T-cell (primary cell): ENCODE measurements at regions of chr1 and their contacts with region 1.

Region 1: DNA sequence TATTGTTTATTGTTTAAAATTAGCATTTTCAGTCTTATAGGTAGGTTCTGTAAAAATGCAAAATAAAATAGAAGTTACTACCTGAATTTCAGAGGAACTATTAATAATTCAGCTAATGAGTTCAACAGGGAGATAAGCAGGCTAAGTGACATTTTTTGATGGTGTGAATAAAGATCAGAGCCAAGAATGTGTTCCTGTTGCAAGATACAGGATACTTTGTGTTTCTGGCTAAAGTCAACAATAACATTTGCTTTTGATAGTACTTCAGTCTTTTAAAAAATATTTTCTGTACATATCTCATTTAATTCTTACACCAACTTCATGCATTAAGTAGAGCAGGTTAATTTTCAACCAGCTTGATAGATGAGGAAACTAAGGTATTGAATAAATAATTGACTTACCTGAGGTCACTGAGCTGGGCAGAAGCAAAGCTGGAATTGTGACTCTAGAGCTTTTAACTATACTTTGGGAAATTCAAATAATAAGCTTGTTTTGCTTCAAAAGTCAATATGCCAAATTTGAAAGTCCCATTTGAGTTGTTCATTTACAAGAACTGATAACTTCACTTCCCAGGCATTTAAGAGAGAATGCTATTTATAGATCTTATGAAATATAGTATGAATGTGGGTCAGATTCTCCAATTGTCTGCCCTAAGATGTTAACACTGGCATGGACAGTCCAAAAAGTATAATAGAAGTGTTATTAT is 6.0 kb downstream of the GORAB start:
- DNase-seq: no peak
- ATAC-seq: no peak
- H3K4me3 ChIP-seq: no peak overlapping the region
- H3K4me3 Mint-ChIP-seq: no peak overlapping the region
- H3K27ac ChIP-seq: no peak overlapping the region
- H3K27ac Mint-ChIP-seq: no peak overlapping the region
- H3K4me1 ChIP-seq: peaks cover 3 to 4% of the 10 kb centered on the region in 2 experiments
- H3K4me1 Mint-ChIP-seq: peaks cover 25 to 31% (median 28%) of the 10 kb centered on the region in 3 donors
- H3K27me3 ChIP-seq: no peaks in the 10 kb centered on the region
- H3K27me3 Mint-ChIP-seq: no peaks in the 10 kb centered on the region

Region 2: DNA sequence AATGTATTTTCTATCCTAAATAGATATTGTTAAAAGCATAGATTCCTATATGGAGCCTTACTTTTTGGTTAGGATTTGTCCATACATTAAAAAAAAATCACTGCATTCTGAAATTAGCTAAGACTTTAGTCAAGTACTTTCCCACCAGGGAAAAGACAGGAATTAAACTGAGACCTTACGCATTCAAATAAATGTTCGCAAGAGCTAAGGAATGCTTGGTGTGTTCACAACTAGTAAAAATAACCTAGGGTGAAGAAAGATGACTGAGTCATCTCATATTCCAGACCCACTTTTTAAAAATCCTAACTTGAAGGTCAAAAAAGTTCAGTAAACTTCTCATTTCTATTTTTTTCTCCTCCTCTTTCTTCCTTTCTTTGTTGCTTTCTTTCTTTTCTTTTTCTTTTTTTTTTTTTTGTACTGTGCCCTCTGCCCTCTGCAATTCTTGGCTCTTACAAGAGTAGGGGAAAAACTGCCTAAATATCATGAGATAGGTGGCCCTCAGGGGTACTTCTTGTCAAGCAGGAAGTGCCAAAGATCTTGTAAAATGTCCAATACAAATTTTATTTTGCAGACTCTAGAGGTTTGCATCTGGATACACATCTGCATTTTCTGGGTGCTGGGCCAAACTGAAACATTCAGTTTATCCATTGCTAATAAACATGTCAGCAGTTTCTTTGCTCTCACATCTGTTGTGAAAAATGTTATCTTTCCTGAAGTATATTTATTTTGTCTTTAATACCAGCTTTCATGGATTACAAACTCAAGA is 127.4 kb before region 1 on chr1:
- CTCF ChIA-PET with region 1: no interaction called
- POLR2A ChIA-PET with region 1: no interaction called
- DNase-seq: no peak
- ATAC-seq: no peak
- H3K4me3 ChIP-seq: no peak overlapping the region
- H3K4me3 Mint-ChIP-seq: no peak overlapping the region
- H3K27ac ChIP-seq: no peak overlapping the region
- H3K27ac Mint-ChIP-seq: no peak overlapping the region
- H3K4me1 ChIP-seq: no peaks in the 10 kb centered on the region
- H3K4me1 Mint-ChIP-seq: no peaks in the 10 kb centered on the region
- H3K27me3 ChIP-seq: no peaks in the 10 kb centered on the region
- H3K27me3 Mint-ChIP-seq: peaks cover 9 to 16% of the 10 kb centered on the region in 2 donors

Region 3: DNA sequence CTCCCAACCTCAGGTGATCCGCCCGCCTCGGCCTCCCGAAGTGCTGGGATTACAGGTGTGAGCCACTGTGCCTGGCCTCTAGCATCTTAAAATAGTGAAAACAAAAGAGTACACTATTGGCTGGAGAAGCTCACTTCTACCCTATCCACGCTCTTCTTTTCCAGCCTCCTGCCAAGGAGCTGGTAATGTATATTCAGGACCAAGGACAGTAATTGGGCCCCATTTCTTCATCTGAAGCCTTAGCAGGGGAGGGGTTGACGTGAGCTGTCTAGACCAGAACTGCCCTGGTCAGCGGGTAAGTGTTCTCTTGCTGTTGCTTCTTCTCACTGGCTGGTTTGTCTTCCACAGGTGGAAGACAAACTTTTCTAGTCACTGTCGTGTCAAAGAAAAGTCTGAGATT is 1373.6 kb after region 1 on chr1:
- CTCF ChIA-PET with region 1: no interaction called
- POLR2A ChIA-PET with region 1: interaction called in 1 of 2 experiments, 16 read pairs
- DNase-seq: no peak
- ATAC-seq: no peak
- H3K4me3 ChIP-seq: no peak overlapping the region
- H3K4me3 Mint-ChIP-seq: no peak overlapping the region
- H3K27ac ChIP-seq: no peak overlapping the region
- H3K27ac Mint-ChIP-seq: no peak overlapping the region
- H3K4me1 ChIP-seq: no peaks in the 10 kb centered on the region
- H3K4me1 Mint-ChIP-seq: no peaks in the 10 kb centered on the region
- H3K27me3 ChIP-seq: peaks cover 0 to 2% of the 10 kb centered on the region in 2 experiments
- H3K27me3 Mint-ChIP-seq: peaks cover 0 to 1% of the 10 kb centered on the region in 2 donors